K562 (cell line): ENCODE measurements at regions of chr1 and their contacts with region 1.

Region 1: GRCh38 chr1:41573785-41574713 is 89.6 kb upstream of the EDN2 start:
- DNase-seq: peak; percentile 73 to 81 (median 80)
- ATAC-seq: peak; percentile 97
- H3K4me3 ChIP-seq: no peak overlapping the region
- H3K27ac ChIP-seq: no peak overlapping the region
- H3K4me1 ChIP-seq: no peaks in the 10 kb centered on the region
- H3K27me3 ChIP-seq: peaks cover 0 to 14% of the 10 kb centered on the region in 2 experiments; a peak in 2 of 5 replicates
- CTCF ChIP-seq: peak; percentile 93 to 94 (median 93)
- EP300 ChIP-seq: no peak
- POLR2A ChIP-seq: no peak
- RAD21 ChIP-seq: peak; percentile 90 to 94

Region 2: GRCh38 chr1:41516168-41517061 is 57.6 kb before region 1 on chr1:
- CTCF ChIA-PET with region 1: no interaction called
- POLR2A ChIA-PET with region 1: no interaction called
- in situ Hi-C with region 1: no loop called
- intact Hi-C with region 1: loop called (anchors 1 kb)
- DNase-seq: peak; percentile 87 to 98 (median 95)
- ATAC-seq: peak; percentile 100
- H3K4me3 ChIP-seq: no peak overlapping the region
- H3K27ac ChIP-seq: no peak overlapping the region
- H3K4me1 ChIP-seq: peaks cover 0 to 21% of the 10 kb centered on the region in 2 experiments; a peak in 2 of 5 replicates
- H3K27me3 ChIP-seq: peaks cover 33 to 75% of the 10 kb centered on the region in 2 experiments; a peak in 4 of 5 replicates
- CTCF ChIP-seq: peak; percentile 94 to 97 (median 95)
- EP300 ChIP-seq: no peak
- POLR2A ChIP-seq: no peak
- RAD21 ChIP-seq: peak; percentile 58 to 78

Region 3: DNA sequence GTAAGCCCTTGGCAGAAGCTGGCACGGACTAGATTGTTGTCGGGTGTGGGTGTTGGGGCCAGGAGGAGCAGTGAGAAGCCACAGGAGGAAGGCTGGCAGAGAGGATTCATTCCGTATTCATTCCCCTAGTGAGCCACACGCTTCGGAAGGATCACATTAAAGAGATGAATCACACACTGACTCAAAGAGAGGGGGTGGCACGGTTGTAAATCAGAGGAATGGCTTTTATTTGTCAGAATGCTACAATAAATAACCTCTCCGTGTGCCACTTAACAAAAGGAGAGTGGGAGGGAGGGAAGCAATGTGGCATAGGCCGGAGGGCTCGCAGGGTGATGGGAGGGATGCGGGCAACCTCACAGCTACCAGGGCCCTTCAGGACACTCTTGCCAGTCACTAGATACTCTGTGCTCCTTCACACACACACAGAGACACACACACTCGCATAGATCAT is 209.2 kb after region 1 on chr1:
- CTCF ChIA-PET with region 1: no interaction called
- POLR2A ChIA-PET with region 1: no interaction called
- in situ Hi-C with region 1: no loop called
- intact Hi-C with region 1: loop called (anchors 10 kb)
- DNase-seq: no peak
- ATAC-seq: no peak
- H3K4me3 ChIP-seq: no peak overlapping the region
- H3K27ac ChIP-seq: no peak overlapping the region
- H3K4me1 ChIP-seq: no peaks in the 10 kb centered on the region
- H3K27me3 ChIP-seq: peaks cover 4 to 31% of the 10 kb centered on the region in 2 experiments; a peak in 4 of 5 replicates
- CTCF ChIP-seq: no peak
- EP300 ChIP-seq: no peak
- POLR2A ChIP-seq: no peak
- RAD21 ChIP-seq: no peak

Region 4: DNA sequence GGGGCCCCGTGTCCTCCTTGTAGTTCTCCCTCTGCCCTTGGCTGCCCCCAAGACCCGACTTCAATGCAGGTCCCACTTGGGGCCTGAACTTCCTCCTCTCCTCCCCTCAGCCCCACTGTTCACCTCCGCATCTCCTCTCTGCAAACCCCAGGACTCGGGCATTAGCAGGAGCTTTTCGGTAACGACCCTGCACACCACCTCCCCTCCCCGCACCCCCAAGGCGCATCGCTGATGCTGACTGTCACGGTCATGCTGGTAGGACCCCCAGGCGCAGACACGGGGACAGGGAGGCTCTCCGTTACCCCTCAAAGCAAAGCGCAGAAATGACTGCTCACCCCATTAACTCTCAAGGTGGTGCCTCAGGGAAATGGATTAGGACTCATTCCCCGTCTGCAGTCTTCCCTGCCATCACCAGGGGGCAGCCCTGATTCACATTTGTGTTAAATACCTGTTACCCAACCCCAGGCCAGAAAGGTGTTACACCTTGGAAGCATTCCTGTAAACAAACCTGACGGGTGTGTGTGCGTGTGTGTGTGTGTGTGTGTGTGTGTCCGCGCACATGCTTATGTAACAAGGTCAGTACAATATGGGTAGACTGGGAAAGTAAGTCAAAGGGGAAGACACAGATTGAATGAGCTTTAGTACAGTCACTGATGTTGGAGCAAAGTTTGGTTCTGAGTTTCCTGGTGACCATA is 572.7 kb after region 1 on chr1:
- CTCF ChIA-PET with region 1: no interaction called
- POLR2A ChIA-PET with region 1: no interaction called
- in situ Hi-C with region 1: loop called (anchors 10 kb)
- intact Hi-C with region 1: no loop called
- DNase-seq: peak; percentile 75 to 79 (median 76)
- ATAC-seq: peak; percentile 94
- H3K4me3 ChIP-seq: no peak overlapping the region
- H3K27ac ChIP-seq: no peak overlapping the region
- H3K4me1 ChIP-seq: peaks cover 0 to 4% of the 10 kb centered on the region in 2 experiments; a peak in 1 of 5 replicates
- H3K27me3 ChIP-seq: peaks cover 21 to 60% of the 10 kb centered on the region in 2 experiments
- CTCF ChIP-seq: peak; percentile 80 to 95 (median 91)
- EP300 ChIP-seq: no peak
- POLR2A ChIP-seq: no peak
- RAD21 ChIP-seq: peak; percentile 73 to 95

Region 5: DNA sequence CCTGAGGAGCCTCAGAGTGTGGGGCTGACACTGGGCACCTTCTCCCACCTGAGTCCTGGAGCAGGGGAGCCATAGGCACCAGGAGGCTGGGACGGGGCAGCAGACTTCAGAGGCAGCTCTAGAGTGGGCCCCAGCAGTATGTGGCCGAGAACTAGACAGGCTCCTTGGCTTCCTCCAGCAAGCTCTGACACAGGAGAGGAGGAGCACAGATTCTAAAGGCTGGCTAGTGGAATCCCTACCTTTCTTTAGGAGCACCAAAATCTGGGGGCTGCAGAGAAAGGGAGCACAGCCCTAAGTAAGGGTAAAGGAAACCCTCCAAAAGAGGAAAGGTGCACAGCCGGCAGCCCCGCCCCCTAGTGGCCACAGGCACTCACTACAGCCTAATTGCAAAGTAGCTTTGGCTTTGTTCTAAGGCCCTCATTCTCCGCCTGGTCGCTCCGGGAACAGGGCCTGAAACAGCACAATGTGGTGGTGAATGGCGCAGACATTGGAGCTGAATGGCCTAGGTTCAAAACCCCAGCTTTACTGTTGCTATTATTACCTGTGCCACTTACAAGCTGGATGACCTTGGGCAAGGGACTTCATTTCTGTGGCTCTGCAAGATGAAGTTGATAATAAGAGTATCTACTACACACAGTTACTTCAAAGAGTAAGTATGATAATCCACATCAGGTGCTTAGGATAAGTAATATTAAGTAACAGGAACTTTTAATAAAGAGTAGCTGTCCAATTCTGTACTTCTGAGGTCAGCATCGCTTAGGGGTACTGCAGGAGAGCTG is 599.3 kb after region 1 on chr1:
- CTCF ChIA-PET with region 1: no interaction called
- POLR2A ChIA-PET with region 1: no interaction called
- in situ Hi-C with region 1: no loop called
- intact Hi-C with region 1: loop called (anchors 10 kb)
- DNase-seq: peak; percentile 74 to 84 (median 82)
- ATAC-seq: peak; percentile 89
- H3K4me3 ChIP-seq: no peak overlapping the region
- H3K27ac ChIP-seq: no peak overlapping the region
- H3K4me1 ChIP-seq: peaks cover 0 to under 1% of the 10 kb centered on the region in 2 experiments; a peak in 2 of 5 replicates
- H3K27me3 ChIP-seq: no peaks in the 10 kb centered on the region
- CTCF ChIP-seq: peak; percentile 89 to 99 (median 96)
- EP300 ChIP-seq: no peak
- POLR2A ChIP-seq: no peak
- RAD21 ChIP-seq: peak; percentile 56 to 73